Sigmoid colon (tissue), 7 donors: ENCODE measurements at regions of chr3 and their contacts with region 1.

Region 1: DNA sequence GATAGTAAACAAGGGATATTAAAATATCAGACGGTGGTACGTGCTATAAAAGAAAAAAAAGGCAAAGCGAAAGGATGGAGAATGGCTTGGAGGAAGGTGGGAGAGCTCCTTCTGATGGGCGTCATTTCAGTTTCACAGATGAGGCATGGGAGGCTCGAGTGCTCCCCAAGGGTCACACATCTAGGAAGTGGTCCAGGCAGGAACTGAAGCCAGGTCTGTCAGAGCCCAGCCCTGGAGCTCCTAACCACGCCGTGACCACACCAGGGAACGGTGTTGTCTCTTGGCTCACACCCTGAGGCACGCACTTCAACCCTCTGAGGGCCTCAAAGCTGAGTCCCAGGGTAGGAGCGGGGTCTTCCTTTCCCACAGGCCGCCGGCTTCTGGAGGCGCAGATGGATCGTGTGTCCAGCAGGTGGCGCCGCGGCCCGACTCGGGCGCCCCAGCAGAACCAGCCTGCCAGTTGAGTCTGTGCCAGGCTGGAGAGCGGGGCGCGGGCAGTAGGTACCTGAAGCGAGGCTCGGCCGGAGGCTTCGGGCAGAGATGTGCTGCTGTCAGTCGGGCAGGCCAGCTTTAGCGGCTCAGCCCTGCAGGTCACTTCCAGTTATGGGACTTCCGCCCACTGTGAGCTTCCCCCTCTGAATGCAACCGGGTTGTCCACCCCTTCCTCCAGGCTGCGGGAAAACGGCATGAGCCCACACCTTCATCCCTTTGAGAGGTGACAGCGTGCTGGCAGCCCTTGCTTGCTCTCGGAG is 68.1 kb downstream of the SLC6A1 start:
- DNase-seq: peak; percentile 84
- H3K4me3 ChIP-seq: peak overlapping the region in 3 of 4 donors; percentile 16 to 35 (median 33)
- H3K27ac ChIP-seq: peak overlapping the region in 1 of 4 donors; percentile 12
- H3K4me1 ChIP-seq: peaks cover 0 to 21% (median 15%) of the 10 kb centered on the region in 4 donors
- H3K27me3 ChIP-seq: peaks cover 0 to 13% (median 6%) of the 10 kb centered on the region in 3 donors
- CTCF ChIP-seq: peak; percentile 82 to 93 (median 92)
- EP300 ChIP-seq: no peak
- POLR2A ChIP-seq: no peak

Region 2: DNA sequence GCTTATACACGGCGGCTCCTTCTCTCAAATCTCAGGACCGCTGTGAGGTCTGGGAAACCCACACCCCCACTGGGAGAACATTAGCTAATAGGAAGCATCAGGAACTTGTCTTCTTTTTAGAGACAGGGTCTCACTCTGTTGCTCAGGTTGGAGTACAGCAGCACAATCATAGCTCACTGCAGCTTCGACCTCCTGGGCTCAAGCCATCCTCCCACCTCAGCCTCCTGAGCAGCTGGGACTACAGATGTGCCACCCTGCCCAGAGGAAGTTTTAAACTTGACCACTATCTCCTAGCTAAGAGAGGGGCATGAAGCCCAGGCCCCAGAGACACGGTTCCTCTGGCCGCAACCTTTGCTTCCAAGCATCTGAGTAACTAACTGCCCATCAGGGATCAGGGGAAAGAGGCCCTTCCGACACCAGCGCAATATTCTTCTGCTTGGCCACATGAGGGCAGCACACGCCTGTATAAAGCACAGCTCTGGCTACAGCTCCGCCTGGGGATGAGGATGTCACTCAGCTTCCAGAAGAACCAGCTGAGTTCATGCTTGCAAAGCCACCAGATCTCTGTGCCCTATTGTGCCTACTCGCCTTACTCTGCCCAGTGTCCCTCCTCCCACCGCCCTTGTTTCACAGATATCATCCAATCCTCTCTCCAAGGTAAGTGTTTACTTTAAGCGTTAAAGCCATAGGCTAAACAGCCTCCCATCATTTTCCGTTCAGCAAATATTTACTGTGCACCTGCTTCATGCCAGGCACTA is 302.2 kb before region 1 on chr3:
- intact Hi-C with region 1: loop called (anchors 2 kb)
- DNase-seq: no peak
- H3K4me3 ChIP-seq: no peak overlapping the region
- H3K27ac ChIP-seq: no peak overlapping the region
- H3K4me1 ChIP-seq: no peaks in the 10 kb centered on the region
- H3K27me3 ChIP-seq: peaks cover 0 to 38% (median 0%) of the 10 kb centered on the region in 3 donors
- CTCF ChIP-seq: peak in 3 of 4 experiments; percentile 45 to 59 (median 50)
- EP300 ChIP-seq: no peak
- POLR2A ChIP-seq: no peak

Region 3: DNA sequence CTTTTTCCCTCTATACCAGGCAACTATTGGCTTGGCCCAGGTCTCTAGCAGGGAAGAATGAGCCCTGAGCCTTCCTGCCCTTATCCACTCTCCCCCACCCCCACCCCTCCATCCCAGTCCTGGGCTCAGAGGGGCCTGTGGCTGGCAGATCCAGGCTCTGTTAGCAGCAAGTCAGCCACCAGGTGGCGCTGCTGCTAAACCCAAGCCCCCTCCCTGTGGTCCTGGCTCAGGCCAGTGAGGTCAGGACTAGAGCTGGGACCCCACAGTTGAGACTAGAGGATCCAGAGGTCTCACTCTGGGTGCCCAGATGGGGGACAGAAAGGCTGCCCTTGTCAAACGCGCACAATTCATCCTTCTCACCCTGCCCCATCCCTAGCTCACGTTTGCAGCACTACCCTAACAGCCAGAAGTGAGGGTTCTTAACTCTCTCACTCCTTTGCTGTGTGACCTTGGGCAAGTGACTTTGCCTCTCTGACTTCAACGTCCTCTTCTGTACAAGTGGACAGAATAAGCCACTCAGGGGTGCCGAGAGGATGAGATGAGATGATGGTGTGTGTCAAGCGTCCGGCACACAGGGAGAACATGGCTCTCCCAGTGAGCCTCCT is 114.9 kb before region 1 on chr3:
- intact Hi-C with region 1: loop called (anchors 1 kb)
- DNase-seq: peak; percentile 65
- H3K4me3 ChIP-seq: no peak overlapping the region
- H3K27ac ChIP-seq: no peak overlapping the region
- H3K4me1 ChIP-seq: no peaks in the 10 kb centered on the region
- H3K27me3 ChIP-seq: no peaks in the 10 kb centered on the region
- CTCF ChIP-seq: peak; percentile 55 to 89 (median 76)
- EP300 ChIP-seq: no peak
- POLR2A ChIP-seq: no peak

Region 4: DNA sequence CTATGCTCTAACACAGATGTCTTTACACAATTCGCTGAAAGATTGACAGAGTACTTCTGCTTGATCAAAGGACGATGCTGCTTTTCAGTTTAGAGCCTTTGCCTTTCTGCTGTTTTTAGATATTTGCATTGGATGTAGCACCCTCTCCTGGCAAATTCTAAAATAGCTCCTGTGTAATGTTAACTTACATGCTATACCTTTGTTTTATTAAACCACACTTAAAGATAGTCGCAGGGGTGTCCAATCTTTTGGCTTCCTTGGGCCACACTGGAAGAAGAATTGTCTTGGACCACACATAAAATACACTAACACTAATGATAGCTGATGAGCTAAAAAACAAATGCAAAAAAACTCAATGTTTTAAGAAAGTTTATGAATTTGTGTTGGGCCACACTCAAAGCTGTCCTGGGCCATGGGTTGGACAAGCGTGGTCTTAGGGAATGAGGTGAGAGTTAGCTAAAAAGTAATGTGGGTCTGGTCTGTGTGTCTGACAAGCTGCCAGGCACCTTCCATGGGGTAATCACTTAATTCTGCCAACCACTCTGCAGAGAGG is 274.5 kb after region 1 on chr3:
- intact Hi-C with region 1: loop called (anchors 1 kb)
- DNase-seq: no peak
- H3K4me3 ChIP-seq: no peak overlapping the region
- H3K27ac ChIP-seq: no peak overlapping the region
- H3K4me1 ChIP-seq: no peaks in the 10 kb centered on the region
- H3K27me3 ChIP-seq: no peaks in the 10 kb centered on the region
- CTCF ChIP-seq: peak; percentile 45 to 71 (median 68)
- EP300 ChIP-seq: no peak
- POLR2A ChIP-seq: no peak